ENCODE measurements at regions of chr1 and their contacts with region 1.

Region 1: GRCh38 chr1:161098210-161099068 is at the start of gene KLHDC9:
- DNase-seq: peak; percentile 69
- ATAC-seq: peak; percentile 84
- H3K4me3 ChIP-seq: peak within 1 kb of the TSS; percentile 41 to 43
- H3K27ac ChIP-seq: peak within 1 kb of the TSS; percentile 50
- H3K4me1 ChIP-seq: peaks cover 3 to 26% of the 10 kb centered on the region in 2 experiments; a peak in 3 of 4 replicates
- H3K27me3 ChIP-seq: no peaks in the 10 kb centered on the region
- CTCF ChIP-seq: no peak
- POLR2A ChIP-seq: no peak
- RAD21 ChIP-seq: no peak
- total RNA-seq, gene KLHDC9: 1.4 TPM

Region 2: GRCh38 chr1:160997323-160998038 is 101.0 kb before region 1 on chr1:
- CTCF ChIA-PET with region 1: interaction called, 20 read pairs
- POLR2A ChIA-PET with region 1: no interaction called
- RAD21 ChIA-PET with region 1: interaction called, 3 to 7 read pairs
- intact Hi-C with region 1: loop called (anchors 1 kb)
- DNase-seq: peak; percentile 51
- ATAC-seq: peak; percentile 71
- H3K4me3 ChIP-seq: no peak overlapping the region
- H3K27ac ChIP-seq: peak overlapping the region; percentile 61
- H3K4me1 ChIP-seq: peaks cover 30 to 60% of the 10 kb centered on the region in 2 experiments
- H3K27me3 ChIP-seq: no peaks in the 10 kb centered on the region
- CTCF ChIP-seq: peak; percentile 58 to 75 (median 73); a peak in 5 of 6 replicates
- POLR2A ChIP-seq: no peak
- RAD21 ChIP-seq: peak; percentile 75

Region 3: GRCh38 chr1:161045750-161046571 is 52.5 kb before region 1 on chr1 and contains the start of gene USF1:
- CTCF ChIA-PET with region 1: interaction called, 4 read pairs
- POLR2A ChIA-PET with region 1: interaction called, 3 read pairs
- RAD21 ChIA-PET with region 1: no interaction called
- intact Hi-C with region 1: loop called (anchors 2 kb)
- DNase-seq: peak; percentile 90
- ATAC-seq: peak; percentile 81
- H3K4me3 ChIP-seq: peak within 1 kb of the TSS; percentile 66 to 70
- H3K27ac ChIP-seq: peak within 1 kb of the TSS; percentile 85
- H3K4me1 ChIP-seq: peaks cover 5 to 17% of the 10 kb centered on the region in 2 experiments; a peak in 2 of 4 replicates
- H3K27me3 ChIP-seq: no peaks in the 10 kb centered on the region
- CTCF ChIP-seq: no peak
- POLR2A ChIP-seq: no peak
- RAD21 ChIP-seq: no peak
- total RNA-seq, gene USF1: 48.0 TPM

Region 4: DNA sequence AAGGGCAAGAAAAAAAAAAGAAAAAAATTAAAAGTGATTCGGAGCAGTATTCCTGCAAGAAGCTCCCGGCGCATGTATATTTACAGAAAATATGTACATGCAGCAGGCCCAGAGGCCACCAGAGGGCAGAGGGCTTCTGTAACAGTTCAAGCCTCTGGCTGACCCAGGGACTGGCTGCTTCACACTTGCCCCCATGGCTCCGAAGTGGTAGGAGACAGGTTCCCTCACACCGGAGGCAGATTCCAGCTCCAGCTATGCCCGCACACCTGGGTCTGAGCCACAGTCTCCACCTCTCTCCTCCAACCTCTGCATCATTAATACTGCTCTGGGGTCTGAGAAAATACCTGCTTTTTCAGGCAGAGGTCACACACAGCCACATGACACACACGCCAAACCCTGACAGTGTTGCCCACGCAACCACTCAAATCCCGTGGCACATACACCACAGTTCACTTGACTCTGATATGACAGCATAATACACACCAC is 26.5 kb before region 1 on chr1:
- CTCF ChIA-PET with region 1: interaction called, 25 read pairs
- POLR2A ChIA-PET with region 1: interaction called, 5 read pairs
- RAD21 ChIA-PET with region 1: interaction called in 1 of 2 experiments, 3 read pairs
- intact Hi-C with region 1: loop called (anchors 1 kb)
- DNase-seq: peak; percentile 29
- ATAC-seq: peak; percentile 66
- H3K4me3 ChIP-seq: no peak overlapping the region
- H3K27ac ChIP-seq: no peak overlapping the region
- H3K4me1 ChIP-seq: peaks cover 0 to 46% of the 10 kb centered on the region in 2 experiments; a peak in 2 of 4 replicates
- H3K27me3 ChIP-seq: no peaks in the 10 kb centered on the region
- CTCF ChIP-seq: peak; percentile 57 to 88 (median 70)
- POLR2A ChIP-seq: no peak
- RAD21 ChIP-seq: peak; percentile 90

Region 5: GRCh38 chr1:161127649-161128048 is 29.2 kb after region 1 on chr1:
- CTCF ChIA-PET with region 1: no interaction called
- POLR2A ChIA-PET with region 1: no interaction called
- RAD21 ChIA-PET with region 1: no interaction called
- intact Hi-C with region 1: no loop called
- DNase-seq: no peak
- ATAC-seq: no peak
- H3K4me3 ChIP-seq: no peak overlapping the region
- H3K27ac ChIP-seq: no peak overlapping the region
- H3K4me1 ChIP-seq: peaks cover 3 to 11% of the 10 kb centered on the region in 2 experiments; a peak in 3 of 4 replicates
- H3K27me3 ChIP-seq: no peaks in the 10 kb centered on the region
- CTCF ChIP-seq: no peak
- POLR2A ChIP-seq: no peak
- RAD21 ChIP-seq: no peak

Region 6: GRCh38 chr1:161159087-161159912 is 60.9 kb after region 1 on chr1 and contains the start of gene USP21:
- CTCF ChIA-PET with region 1: no interaction called
- POLR2A ChIA-PET with region 1: no interaction called
- RAD21 ChIA-PET with region 1: no interaction called
- intact Hi-C with region 1: no loop called
- DNase-seq: peak; percentile 73
- ATAC-seq: peak; percentile 92
- H3K4me3 ChIP-seq: peak within 1 kb of the TSS; percentile 77 to 91
- H3K27ac ChIP-seq: peak within 1 kb of the TSS; percentile 53
- H3K4me1 ChIP-seq: peaks cover 8 to 24% of the 10 kb centered on the region in 2 experiments; a peak in 2 of 4 replicates
- H3K27me3 ChIP-seq: no peaks in the 10 kb centered on the region
- CTCF ChIP-seq: peak in 2 of 3 experiments; percentile 34 to 43; a peak in 3 of 6 replicates
- POLR2A ChIP-seq: peak; percentile 37
- RAD21 ChIP-seq: no peak
- total RNA-seq, gene USP21: 22.1 TPM

Region 7: GRCh38 chr1:161399257-161399998 is 301.0 kb after region 1 on chr1:
- CTCF ChIA-PET with region 1: no interaction called
- POLR2A ChIA-PET with region 1: no interaction called
- RAD21 ChIA-PET with region 1: no interaction called
- intact Hi-C with region 1: no loop called
- DNase-seq: peak; percentile 88
- ATAC-seq: peak; percentile 83
- H3K4me3 ChIP-seq: peak overlapping the region; percentile 63 to 66
- H3K27ac ChIP-seq: peak overlapping the region; percentile 95
- H3K4me1 ChIP-seq: peaks cover 9 to 25% of the 10 kb centered on the region in 2 experiments
- H3K27me3 ChIP-seq: no peaks in the 10 kb centered on the region
- CTCF ChIP-seq: peak in 2 of 3 experiments; percentile 54 to 61; a peak in 4 of 6 replicates
- POLR2A ChIP-seq: peak; percentile 92
- RAD21 ChIP-seq: no peak